ENCODE measurements at regions of chr7 and their contacts with region 1.

Region 1: GRCh38 chr7:95723592-95724180 is 48.7 kb upstream of the DYNC1I1 start:
- DNase-seq: peak; percentile 13
- H3K4me3 Mint-ChIP-seq: no peak overlapping the region
- H3K27ac Mint-ChIP-seq: no peak overlapping the region
- H3K4me1 Mint-ChIP-seq: no peaks in the 10 kb centered on the region
- H3K27me3 Mint-ChIP-seq: no peaks in the 10 kb centered on the region

Region 2: DNA sequence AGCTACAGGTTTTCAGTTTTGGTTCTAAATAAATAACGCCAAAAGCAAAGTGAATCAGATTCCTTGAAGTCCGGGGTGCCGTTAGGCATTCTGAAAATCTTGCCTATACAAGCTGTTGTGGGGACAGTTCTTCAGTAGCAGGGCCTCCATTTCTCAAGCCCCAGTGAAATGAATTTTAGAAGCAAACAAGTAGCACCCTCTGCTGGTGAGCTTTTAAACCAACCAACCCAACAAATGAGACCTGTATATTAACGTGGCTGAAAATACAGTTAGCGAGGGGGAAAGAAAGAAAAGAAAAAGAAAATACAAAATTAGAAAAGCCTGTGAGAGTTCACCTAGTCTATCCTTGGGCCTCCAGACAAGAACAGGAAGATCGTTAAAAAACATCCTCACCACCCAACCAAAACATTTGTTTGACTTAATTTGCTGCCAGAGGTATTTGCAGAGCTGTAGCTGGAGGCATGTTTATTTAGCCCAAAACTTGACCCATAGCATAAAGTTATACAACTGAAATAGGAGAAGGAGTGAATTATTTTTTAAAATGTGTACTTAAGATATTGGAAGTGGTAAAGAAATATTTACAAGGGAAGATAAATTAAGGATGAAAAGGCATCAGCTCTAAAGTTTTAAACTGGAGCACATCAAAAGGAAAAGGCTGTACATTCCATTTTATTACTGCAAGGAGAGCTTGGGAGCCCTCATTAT is 147.5 kb after region 1 on chr7:
- CTCF ChIA-PET with region 1: no interaction called
- POLR2A ChIA-PET with region 1: no interaction called
- intact Hi-C with region 1: loop called (anchors 5 kb)
- DNase-seq: no peak
- H3K4me3 Mint-ChIP-seq: no peak overlapping the region
- H3K27ac Mint-ChIP-seq: no peak overlapping the region
- H3K4me1 Mint-ChIP-seq: no peaks in the 10 kb centered on the region
- H3K27me3 Mint-ChIP-seq: peaks cover 8% of the 10 kb centered on the region

Measured in activated CD4-positive, alpha-beta memory T cell treated with anti-CD3 and anti-CD28 coated beads for 36 hours (primary cell).